ENCODE measurements at regions of chr10 and their contacts with region 1.

Region 1: DNA sequence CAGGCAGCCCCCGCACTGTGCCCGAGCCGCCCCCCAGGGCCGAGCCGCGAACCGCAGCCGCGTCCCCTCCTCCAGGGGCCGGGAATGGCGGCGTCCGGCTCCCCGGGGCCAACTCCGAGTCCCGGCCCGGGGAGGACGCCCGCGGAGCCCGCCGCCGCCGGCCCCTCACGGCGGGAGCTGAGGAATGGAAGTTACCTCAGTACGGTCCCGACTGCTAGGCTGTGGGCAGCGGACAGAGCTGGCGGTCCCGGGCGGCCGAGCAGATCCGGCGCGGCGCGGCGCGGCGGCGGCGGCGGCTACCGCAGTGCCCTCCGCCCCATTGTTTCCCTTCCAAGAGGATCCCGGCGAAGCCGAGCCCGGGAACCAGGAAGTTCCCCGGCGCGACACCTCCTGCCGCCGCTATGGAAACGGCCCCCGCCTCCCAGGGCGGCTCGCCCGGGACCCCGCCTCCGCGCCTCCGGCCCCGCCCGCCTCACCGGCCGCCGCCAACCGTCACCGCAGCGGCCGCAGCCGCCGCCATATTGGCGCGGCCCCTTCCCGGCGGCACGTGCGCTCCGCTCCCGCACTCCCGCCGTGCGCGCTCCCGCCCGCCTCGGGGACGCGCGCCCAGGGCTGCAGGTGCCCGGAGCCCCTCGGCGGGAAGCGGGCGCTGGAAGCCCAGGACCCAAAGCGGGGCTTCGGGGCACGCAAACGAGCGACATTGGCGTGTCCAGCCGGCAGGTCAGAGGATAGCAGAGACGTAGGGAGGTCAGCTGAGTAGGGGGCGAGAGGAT is at the start of gene USP6NL:
- DNase-seq: peak; percentile 88
- ATAC-seq: peak; percentile 81
- H3K4me3 ChIP-seq: peak within 1 kb of the TSS; percentile 70 to 87 (median 81)
- H3K4me3 Mint-ChIP-seq: peak within 1 kb of the TSS; percentile 95
- H3K27ac ChIP-seq: peak within 1 kb of the TSS; percentile 67 to 87
- H3K27ac Mint-ChIP-seq: peak within 1 kb of the TSS; percentile 97
- H3K4me1 ChIP-seq: peaks cover 37 to 42% of the 10 kb centered on the region in 2 donors
- H3K4me1 Mint-ChIP-seq: peaks cover 42% of the 10 kb centered on the region
- H3K27me3 ChIP-seq: no peaks in the 10 kb centered on the region
- H3K27me3 Mint-ChIP-seq: no peaks in the 10 kb centered on the region
- CTCF ChIP-seq: no peak
- total RNA-seq, gene USP6NL: 61.5 and 62.6 TPM in 2 replicates

Region 2: GRCh38 chr10:11515596-11516430 is 95.6 kb before region 1 on chr10:
- CTCF ChIA-PET with region 1: interaction called, 18 read pairs
- POLR2A ChIA-PET with region 1: no interaction called
- intact Hi-C with region 1: loop called (anchors 2 kb)
- DNase-seq: peak; percentile 79
- ATAC-seq: peak; percentile 84
- H3K4me3 ChIP-seq: peak overlapping the region in 1 of 5 experiments; percentile 2
- H3K4me3 Mint-ChIP-seq: peak overlapping the region; percentile 18
- H3K27ac ChIP-seq: peak overlapping the region in 1 of 2 donors; percentile 48
- H3K27ac Mint-ChIP-seq: peak overlapping the region; percentile 80
- H3K4me1 ChIP-seq: peaks cover 22% of the 10 kb centered on the region in 2 donors
- H3K4me1 Mint-ChIP-seq: peaks cover 46% of the 10 kb centered on the region
- H3K27me3 ChIP-seq: no peaks in the 10 kb centered on the region
- H3K27me3 Mint-ChIP-seq: no peaks in the 10 kb centered on the region
- CTCF ChIP-seq: peak; percentile 97

Region 3: DNA sequence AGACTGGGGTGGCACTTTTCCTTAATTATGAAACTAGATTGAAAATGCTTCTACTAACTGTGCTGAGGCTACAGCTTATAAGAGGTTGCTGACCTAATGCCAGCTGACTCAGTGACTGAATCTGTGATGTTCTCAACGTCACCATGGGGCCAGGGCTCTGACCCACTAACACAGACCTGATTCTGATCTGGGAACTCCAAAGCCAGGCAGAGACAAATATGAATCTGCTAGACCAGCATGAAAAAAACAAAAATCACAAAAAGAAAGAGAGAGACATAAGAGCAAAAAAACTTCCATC is 16.1 kb before region 1 on chr10:
- CTCF ChIA-PET with region 1: interaction called, 5 read pairs
- POLR2A ChIA-PET with region 1: interaction called, 8 read pairs
- intact Hi-C with region 1: loop called (anchors 2 kb)
- DNase-seq: no peak
- ATAC-seq: peak; percentile 23
- H3K4me3 ChIP-seq: peak overlapping the region in 3 of 5 experiments; percentile 1 to 47 (median 15)
- H3K4me3 Mint-ChIP-seq: peak overlapping the region; percentile 77
- H3K27ac ChIP-seq: peak overlapping the region; percentile 53 to 80
- H3K27ac Mint-ChIP-seq: peak overlapping the region; percentile 86
- H3K4me1 ChIP-seq: peaks cover 35 to 62% of the 10 kb centered on the region in 2 donors
- H3K4me1 Mint-ChIP-seq: peaks cover 67% of the 10 kb centered on the region
- H3K27me3 ChIP-seq: no peaks in the 10 kb centered on the region
- H3K27me3 Mint-ChIP-seq: no peaks in the 10 kb centered on the region
- CTCF ChIP-seq: no peak

Region 4: DNA sequence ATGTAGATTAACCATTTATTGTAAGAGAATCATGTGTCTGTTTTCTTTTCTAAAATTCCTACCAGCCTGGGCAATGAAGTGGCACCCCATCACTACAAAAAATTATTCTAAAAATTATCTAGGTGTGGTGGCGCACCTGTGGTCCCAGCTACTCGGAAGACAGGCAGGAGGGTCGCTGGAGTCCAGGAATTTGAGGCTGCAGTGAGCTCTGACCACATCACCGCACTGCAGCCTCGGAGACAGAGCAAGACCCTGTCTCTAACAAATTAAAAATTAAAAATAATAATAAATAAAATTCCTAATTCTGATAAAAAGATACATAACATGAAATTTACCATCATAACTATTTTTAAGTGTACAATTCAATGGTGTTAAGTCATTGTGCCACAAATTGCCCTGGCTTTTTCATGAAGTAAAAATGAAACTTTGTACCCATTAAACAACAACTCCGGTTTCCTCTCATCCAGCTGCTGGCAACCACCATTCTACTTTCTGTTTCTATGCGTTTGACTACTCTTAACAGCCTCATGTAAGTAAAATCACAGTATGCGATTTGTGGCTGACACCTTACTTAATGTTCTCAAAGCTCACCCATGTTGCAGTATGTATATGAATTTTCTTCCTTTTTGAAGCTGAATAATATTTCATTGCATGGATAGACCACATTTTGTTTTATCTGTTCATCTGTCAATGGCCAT is 20.6 kb after region 1 on chr10:
- CTCF ChIA-PET with region 1: interaction called, 11 read pairs
- POLR2A ChIA-PET with region 1: interaction called, 6 read pairs
- intact Hi-C with region 1: loop called (anchors 2 kb)
- DNase-seq: peak; percentile 82
- ATAC-seq: peak; percentile 96
- H3K4me3 ChIP-seq: peak overlapping the region in 3 of 5 experiments; percentile 13 to 43 (median 16)
- H3K4me3 Mint-ChIP-seq: peak overlapping the region; percentile 71
- H3K27ac ChIP-seq: peak overlapping the region; percentile 71 to 77
- H3K27ac Mint-ChIP-seq: peak overlapping the region; percentile 94
- H3K4me1 ChIP-seq: peaks cover 29 to 36% of the 10 kb centered on the region in 2 donors
- H3K4me1 Mint-ChIP-seq: peaks cover 58% of the 10 kb centered on the region
- H3K27me3 ChIP-seq: no peaks in the 10 kb centered on the region
- H3K27me3 Mint-ChIP-seq: no peaks in the 10 kb centered on the region
- CTCF ChIP-seq: no peak

Region 5: DNA sequence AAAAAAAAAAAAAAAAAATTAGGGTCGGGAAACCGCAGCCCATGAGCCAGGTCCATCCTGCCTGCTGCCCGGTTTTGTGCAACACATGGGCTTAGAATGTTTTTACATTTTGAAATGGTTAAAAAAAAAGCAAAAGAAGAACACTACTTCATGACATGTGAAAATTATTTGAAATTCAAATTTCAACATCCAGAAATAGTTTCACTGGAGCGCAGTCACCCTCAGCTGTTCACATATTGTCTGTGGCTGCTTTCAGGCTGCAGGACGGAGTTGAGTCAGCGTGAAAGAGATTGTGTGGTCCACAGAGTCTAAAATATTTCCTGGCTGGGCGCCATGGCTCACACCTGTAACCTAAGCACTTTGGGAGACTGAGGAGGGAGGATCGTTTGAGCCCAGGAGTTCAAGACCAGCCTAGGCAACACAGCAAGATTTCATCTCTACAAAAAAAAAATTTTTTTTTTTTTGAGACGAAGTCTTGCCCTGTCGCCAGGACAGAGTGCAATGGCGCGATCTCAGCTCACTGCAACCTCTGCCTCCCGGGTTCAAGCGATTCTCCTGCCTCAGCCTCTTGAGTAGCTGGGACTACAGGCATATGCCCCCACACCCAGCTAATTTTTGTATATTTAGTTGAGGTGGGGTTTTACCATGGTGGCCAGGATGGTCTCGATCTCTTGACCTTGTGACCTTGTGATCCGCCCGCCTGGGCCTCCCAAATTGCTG is 66.8 kb after region 1 on chr10:
- CTCF ChIA-PET with region 1: interaction called, 4 read pairs
- POLR2A ChIA-PET with region 1: interaction called, 13 read pairs
- intact Hi-C with region 1: no loop called
- DNase-seq: peak; percentile 78
- ATAC-seq: peak; percentile 83
- H3K4me3 ChIP-seq: peak overlapping the region in 3 of 5 experiments; percentile 3 to 33 (median 30)
- H3K4me3 Mint-ChIP-seq: peak overlapping the region; percentile 85
- H3K27ac ChIP-seq: peak overlapping the region; percentile 25 to 35
- H3K27ac Mint-ChIP-seq: peak overlapping the region; percentile 92
- H3K4me1 ChIP-seq: peaks cover 94 to 97% of the 10 kb centered on the region in 2 donors
- H3K4me1 Mint-ChIP-seq: peaks cover 87% of the 10 kb centered on the region
- H3K27me3 ChIP-seq: no peaks in the 10 kb centered on the region
- H3K27me3 Mint-ChIP-seq: no peaks in the 10 kb centered on the region
- CTCF ChIP-seq: no peak

Region 6: GRCh38 chr10:11724938-11725776 is 113.7 kb after region 1 on chr10:
- CTCF ChIA-PET with region 1: interaction called, 27 read pairs
- POLR2A ChIA-PET with region 1: no interaction called
- intact Hi-C with region 1: loop called (anchors 1 kb)
- DNase-seq: peak; percentile 79
- ATAC-seq: peak; percentile 87
- H3K4me3 ChIP-seq: no peak overlapping the region
- H3K4me3 Mint-ChIP-seq: peak overlapping the region; percentile 27
- H3K27ac ChIP-seq: no peak overlapping the region
- H3K27ac Mint-ChIP-seq: peak overlapping the region; percentile 72
- H3K4me1 ChIP-seq: peaks cover 19 to 24% of the 10 kb centered on the region in 2 donors
- H3K4me1 Mint-ChIP-seq: peaks cover 27% of the 10 kb centered on the region
- H3K27me3 ChIP-seq: no peaks in the 10 kb centered on the region
- H3K27me3 Mint-ChIP-seq: no peaks in the 10 kb centered on the region
- CTCF ChIP-seq: peak; percentile 86